H1 (cell line): ENCODE measurements at regions of chr12 and their contacts with region 1.

Region 1: GRCh38 chr12:389139-390096 is at the start of gene KDM5A:
- DNase-seq: peak; percentile 29 to 88
- H3K4me3 ChIP-seq: peak within 1 kb of the TSS; percentile 86 to 98 (median 94)
- H3K27ac ChIP-seq: peak within 1 kb of the TSS; percentile 95
- H3K4me1 ChIP-seq: no peaks in the 10 kb centered on the region; a peak in 2 of 7 replicates
- H3K27me3 ChIP-seq: no peaks in the 10 kb centered on the region
- CTCF ChIP-seq: peak in 1 of 3 experiments; percentile 15; a peak in 1 of 4 replicates
- EP300 ChIP-seq: peak; percentile 34 to 39; a peak in 2 of 3 replicates
- POLR2A ChIP-seq: peak; percentile 85 to 97
- RAD21 ChIP-seq: no peak
- total RNA-seq, gene KDM5A: 36.9 and 45.7 TPM in 2 replicates

Region 2: DNA sequence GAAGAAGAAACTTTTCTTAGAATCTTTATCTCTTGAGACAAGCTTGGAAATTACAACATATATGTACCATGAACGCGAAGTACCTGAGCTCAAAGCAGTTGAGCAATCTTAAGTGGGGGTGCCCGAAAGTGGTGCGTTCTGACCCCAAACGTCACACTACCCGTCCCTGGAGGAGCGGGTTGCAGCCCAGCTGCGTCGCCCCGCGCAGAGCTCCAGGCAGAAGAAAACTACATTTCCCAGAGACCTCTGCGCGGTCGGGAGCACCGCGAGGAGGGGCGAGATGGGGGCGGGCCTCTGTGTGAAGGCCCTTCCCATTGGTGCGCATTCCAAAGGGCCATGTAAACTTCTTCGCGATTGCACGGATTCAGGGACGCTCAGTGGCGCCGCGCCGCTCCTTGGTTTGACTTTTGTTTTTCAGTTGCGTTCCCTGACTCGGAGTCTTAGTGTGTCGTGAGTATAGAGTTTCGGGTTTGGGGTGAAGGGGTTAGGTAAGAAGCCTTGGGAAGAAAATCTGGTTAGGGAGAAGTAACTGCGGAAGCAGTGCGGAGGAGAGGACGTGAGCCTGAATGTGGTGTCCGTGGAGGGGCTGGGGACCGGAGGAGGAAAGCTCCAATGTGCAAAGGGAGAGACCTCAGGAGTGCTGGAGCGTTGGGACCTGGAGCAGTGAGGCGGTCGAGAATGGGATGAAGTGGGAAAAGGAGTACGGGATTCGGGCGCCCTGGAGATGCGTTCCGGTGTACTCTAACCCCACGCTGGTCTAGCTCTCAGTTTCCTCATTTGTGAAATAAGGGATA is 12.0 kb after region 1 on chr12 and contains the start of gene CCDC77:
- CTCF ChIA-PET with region 1: interaction called, 5 read pairs
- POLR2A ChIA-PET with region 1: interaction called, 73 read pairs
- DNase-seq: peak; percentile 80 to 96
- H3K4me3 ChIP-seq: peak within 1 kb of the TSS; percentile 81 to 99 (median 86)
- H3K27ac ChIP-seq: peak within 1 kb of the TSS; percentile 54
- H3K4me1 ChIP-seq: no peaks in the 10 kb centered on the region; a peak in 1 of 7 replicates
- H3K27me3 ChIP-seq: no peaks in the 10 kb centered on the region
- CTCF ChIP-seq: no peak
- EP300 ChIP-seq: no peak
- POLR2A ChIP-seq: peak; percentile 45 to 91
- RAD21 ChIP-seq: no peak
- total RNA-seq, gene CCDC77: 29.3 and 30.4 TPM in 2 replicates

Region 3: GRCh38 chr12:591167-592023 is 202.0 kb after region 1 on chr12:
- CTCF ChIA-PET with region 1: no interaction called
- POLR2A ChIA-PET with region 1: no interaction called
- DNase-seq: no peak
- H3K4me3 ChIP-seq: no peak overlapping the region
- H3K27ac ChIP-seq: no peak overlapping the region
- H3K4me1 ChIP-seq: no peaks in the 10 kb centered on the region
- H3K27me3 ChIP-seq: no peaks in the 10 kb centered on the region
- CTCF ChIP-seq: peak in 2 of 3 experiments; percentile 11 to 41; a peak in 2 of 4 replicates
- EP300 ChIP-seq: no peak
- POLR2A ChIP-seq: no peak
- RAD21 ChIP-seq: no peak; a peak in 1 of 4 replicates